ENCODE measurements at regions of chr5 and their contacts with region 1.

Region 1: GRCh38 chr5:140557136-140557805 is at the start of gene SRA1:
- DNase-seq: peak; percentile 87
- ATAC-seq: peak; percentile 88
- H3K4me3 ChIP-seq: peak within 1 kb of the TSS; percentile 92
- H3K27ac ChIP-seq: peak within 1 kb of the TSS; percentile 96
- H3K4me1 ChIP-seq: peaks cover 16% of the 10 kb centered on the region
- H3K27me3 ChIP-seq: no peaks in the 10 kb centered on the region
- CTCF ChIP-seq: 0 out of 2 replicates have a peak, but pooled peaks have one; percentile 13
- POLR2A ChIP-seq: peak; percentile 99
- RAD21 ChIP-seq: no peak
- total RNA-seq, gene SRA1: 52.9 and 53.9 TPM in 2 replicates

Region 2: DNA sequence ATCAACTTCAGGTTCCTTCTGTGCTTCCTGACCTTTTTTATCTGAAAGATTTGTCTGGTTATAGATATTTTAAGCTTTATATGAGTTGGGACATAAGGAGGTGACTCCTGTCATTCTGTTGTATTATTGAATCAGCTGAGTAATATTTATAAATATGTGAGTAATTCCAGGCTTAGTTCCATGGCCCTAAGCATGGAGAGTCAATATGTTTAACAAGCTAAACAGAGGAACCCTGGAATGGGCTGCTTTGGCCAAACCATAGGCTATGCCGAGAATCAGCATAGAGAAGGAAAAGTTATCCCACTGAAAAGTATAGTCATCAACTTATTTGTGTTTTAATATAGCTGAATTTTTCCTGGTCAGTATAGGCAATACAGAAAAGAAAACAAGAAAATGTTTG is 17.0 kb before region 1 on chr5:
- CTCF ChIA-PET with region 1: interaction called, 11 read pairs
- POLR2A ChIA-PET with region 1: no interaction called
- dilution Hi-C with region 1: no loop called
- in situ Hi-C with region 1: no loop called
- intact Hi-C with region 1: no loop called
- DNase-seq: no peak
- ATAC-seq: peak; percentile 72
- H3K4me3 ChIP-seq: no peak overlapping the region
- H3K27ac ChIP-seq: no peak overlapping the region
- H3K4me1 ChIP-seq: no peaks in the 10 kb centered on the region
- H3K27me3 ChIP-seq: no peaks in the 10 kb centered on the region
- CTCF ChIP-seq: no peak
- POLR2A ChIP-seq: no peak
- RAD21 ChIP-seq: no peak

Measured in IMR-90 (cell line).